ENCODE measurements at regions of chr6 and their contacts with region 1.

Region 1: DNA sequence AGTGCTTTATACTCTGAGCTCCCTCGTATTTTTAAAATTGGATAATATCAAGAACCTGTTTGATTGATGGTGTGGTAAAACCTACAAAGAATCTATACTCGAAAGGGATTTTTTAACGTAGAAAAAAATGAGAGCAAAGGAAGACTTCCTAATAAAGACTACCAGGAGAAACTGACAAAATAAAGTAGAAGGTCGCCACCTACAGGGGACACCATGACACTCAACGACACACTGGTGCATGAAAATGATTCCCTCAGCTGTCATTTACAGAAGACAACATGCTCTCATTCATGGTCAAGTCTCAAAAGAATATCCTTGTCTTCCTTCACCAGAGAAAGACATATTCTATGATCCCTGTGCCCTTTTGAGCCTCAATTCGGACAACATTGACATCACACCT is 10.1 kb upstream of the NHSL1 start:
- DNase-seq: peak; percentile 47
- H3K4me3 ChIP-seq: no peak overlapping the region
- H3K27ac ChIP-seq: no peak overlapping the region
- H3K4me1 ChIP-seq: no peaks in the 10 kb centered on the region
- H3K27me3 ChIP-seq: no peaks in the 10 kb centered on the region
- CTCF ChIP-seq: peak; percentile 64 to 68

Region 2: GRCh38 chr6:138465007-138465645 is 44.2 kb before region 1 on chr6:
- CTCF ChIA-PET with region 1: no interaction called
- dilution Hi-C with region 1: no loop called
- in situ Hi-C with region 1: no loop called
- intact Hi-C with region 1: loop called (anchors 5 kb)
- DNase-seq: peak; percentile 100
- H3K4me3 ChIP-seq: no peak overlapping the region
- H3K27ac ChIP-seq: peak overlapping the region; percentile 90
- H3K4me1 ChIP-seq: peaks cover 60% of the 10 kb centered on the region
- H3K27me3 ChIP-seq: no peaks in the 10 kb centered on the region
- CTCF ChIP-seq: no peak

Measured in mammary epithelial cell (primary cell).